ENCODE measurements at regions of chr15 and their contacts with region 1.

Region 1: GRCh38 chr15:74540761-74541493 is at the start of gene ARID3B:
- DNase-seq: peak; percentile 94
- H3K4me3 ChIP-seq: peak within 1 kb of the TSS; percentile 87 to 98 (median 94)
- H3K27ac ChIP-seq: peak within 1 kb of the TSS; percentile 67
- H3K4me1 ChIP-seq: peaks cover 17% of the 10 kb centered on the region
- H3K27me3 ChIP-seq: no peaks in the 10 kb centered on the region
- CTCF ChIP-seq: no peak
- POLR2A ChIP-seq: peak; percentile 89
- total RNA-seq, gene ARID3B: 9.5 and 10.0 TPM in 2 replicates

Region 2: DNA sequence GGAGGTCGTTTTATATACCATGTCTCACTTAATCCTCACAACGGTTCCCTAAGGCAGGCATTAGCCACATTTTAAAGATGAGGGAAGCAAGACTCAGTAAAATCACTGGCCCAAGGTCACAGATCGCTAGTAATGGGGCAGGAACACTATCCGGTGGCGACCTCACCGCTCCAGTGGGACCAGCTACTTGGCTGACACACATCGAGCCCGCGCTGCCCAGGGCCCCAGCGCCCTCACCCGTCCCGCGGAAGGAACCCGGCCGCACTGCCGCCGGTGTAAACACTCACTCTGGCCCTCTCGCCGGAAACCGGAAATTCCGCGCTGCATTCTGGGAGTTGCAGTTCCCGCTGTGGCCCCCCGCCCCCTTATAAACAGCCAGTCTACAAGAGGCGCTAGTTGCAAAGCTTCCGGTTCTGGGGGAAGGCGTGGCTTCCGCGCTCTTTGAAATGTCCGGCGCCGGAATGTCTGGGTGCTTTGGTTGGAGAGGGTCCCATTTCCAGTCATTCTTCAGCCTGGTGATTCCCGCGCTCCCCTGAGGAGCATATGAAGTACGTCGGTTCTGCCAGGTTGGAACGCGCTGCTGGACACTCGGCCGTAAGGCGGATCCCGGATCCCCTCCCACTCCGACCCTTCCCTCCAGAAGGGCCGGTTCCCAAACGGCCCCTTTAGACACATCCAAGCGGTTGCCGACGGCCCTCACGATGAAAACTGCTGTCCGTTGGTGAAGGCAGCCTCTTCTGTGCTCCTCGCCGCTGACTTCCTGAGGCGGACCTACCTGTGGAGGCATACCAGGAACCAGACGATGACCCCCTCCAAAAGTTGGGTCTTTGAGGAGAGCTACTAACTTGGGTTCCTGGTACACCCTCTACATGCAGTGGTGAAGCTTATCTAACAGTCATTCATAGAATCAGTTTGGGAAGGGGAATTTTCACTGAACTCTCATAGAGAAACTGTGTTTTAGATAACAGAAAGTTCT is 79.8 kb before region 1 on chr15 and contains the start of gene UBL7:
- CTCF ChIA-PET with region 1: interaction called, 4 read pairs
- POLR2A ChIA-PET with region 1: no interaction called
- dilution Hi-C with region 1: no loop called
- intact Hi-C with region 1: loop called (anchors 2 kb)
- DNase-seq: peak; percentile 98
- H3K4me3 ChIP-seq: peak within 1 kb of the TSS; percentile 61 to 71 (median 69)
- H3K27ac ChIP-seq: peak within 1 kb of the TSS; percentile 80
- H3K4me1 ChIP-seq: peaks cover 9% of the 10 kb centered on the region
- H3K27me3 ChIP-seq: no peaks in the 10 kb centered on the region
- CTCF ChIP-seq: peak in 1 of 2 donors; percentile 25
- POLR2A ChIP-seq: peak; percentile 97
- total RNA-seq, gene UBL7: 31.9 and 32.8 TPM in 2 replicates

Region 3: DNA sequence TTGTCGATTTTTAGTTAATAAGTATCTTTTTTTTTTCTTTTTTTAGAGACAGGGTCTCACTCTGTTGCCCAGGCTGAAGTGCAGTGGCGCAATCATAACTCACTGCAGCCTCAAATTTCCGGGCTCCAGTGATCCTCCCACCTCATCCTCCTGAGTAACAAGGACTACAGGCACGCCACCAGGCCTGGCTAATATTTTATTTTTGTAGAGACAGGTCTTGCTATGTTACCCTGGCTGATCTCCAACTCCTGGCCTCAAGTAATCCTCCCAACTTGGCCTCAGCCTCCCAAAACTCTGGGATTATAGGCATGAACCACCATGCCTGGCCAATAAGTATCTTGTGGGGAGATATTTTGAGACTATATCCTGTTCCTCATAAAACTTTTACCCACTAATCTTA is 29.3 kb before region 1 on chr15:
- CTCF ChIA-PET with region 1: no interaction called
- POLR2A ChIA-PET with region 1: no interaction called
- dilution Hi-C with region 1: no loop called
- intact Hi-C with region 1: loop called (anchors 2 kb)
- DNase-seq: no peak
- H3K4me3 ChIP-seq: no peak overlapping the region
- H3K27ac ChIP-seq: peak overlapping the region; percentile 74
- H3K4me1 ChIP-seq: peaks cover 19% of the 10 kb centered on the region
- H3K27me3 ChIP-seq: no peaks in the 10 kb centered on the region
- CTCF ChIP-seq: no peak
- POLR2A ChIP-seq: no peak

Region 4: DNA sequence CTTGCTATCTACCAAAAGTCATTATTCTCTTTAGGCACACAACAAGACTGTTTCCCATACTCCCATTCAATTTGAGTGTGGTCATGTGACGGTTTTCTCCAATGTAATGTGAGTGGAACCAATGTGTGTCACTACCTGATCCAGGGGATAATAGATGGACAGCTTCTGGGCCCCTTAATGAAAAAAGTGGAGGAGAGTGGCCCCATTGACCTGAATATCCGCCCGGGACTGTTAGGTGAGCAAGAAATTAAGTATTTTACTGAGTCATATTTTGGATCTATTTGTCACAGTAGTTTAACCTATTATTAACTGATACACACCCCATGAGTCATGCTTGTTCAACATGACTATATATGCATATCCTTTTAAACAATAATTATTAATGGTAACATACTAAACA is 15.0 kb before region 1 on chr15:
- CTCF ChIA-PET with region 1: interaction called, 9 read pairs
- POLR2A ChIA-PET with region 1: no interaction called
- dilution Hi-C with region 1: no loop called
- intact Hi-C with region 1: loop called (anchors 1 kb)
- DNase-seq: peak; percentile 62
- H3K4me3 ChIP-seq: no peak overlapping the region
- H3K27ac ChIP-seq: peak overlapping the region; percentile 43
- H3K4me1 ChIP-seq: peaks cover 14% of the 10 kb centered on the region
- H3K27me3 ChIP-seq: no peaks in the 10 kb centered on the region
- CTCF ChIP-seq: no peak
- POLR2A ChIP-seq: no peak

Measured in endothelial cell of umbilical vein (primary cell).